Activated CD4-positive, alpha-beta memory T cell treated with anti-CD3 and anti-CD28 coated beads, Interleukin-2, amount 10 ng/mL, durations not matched to agents 7 days and 5 days (primary cell): ENCODE measurements at regions of chr1 and their contacts with region 1.

Region 1: DNA sequence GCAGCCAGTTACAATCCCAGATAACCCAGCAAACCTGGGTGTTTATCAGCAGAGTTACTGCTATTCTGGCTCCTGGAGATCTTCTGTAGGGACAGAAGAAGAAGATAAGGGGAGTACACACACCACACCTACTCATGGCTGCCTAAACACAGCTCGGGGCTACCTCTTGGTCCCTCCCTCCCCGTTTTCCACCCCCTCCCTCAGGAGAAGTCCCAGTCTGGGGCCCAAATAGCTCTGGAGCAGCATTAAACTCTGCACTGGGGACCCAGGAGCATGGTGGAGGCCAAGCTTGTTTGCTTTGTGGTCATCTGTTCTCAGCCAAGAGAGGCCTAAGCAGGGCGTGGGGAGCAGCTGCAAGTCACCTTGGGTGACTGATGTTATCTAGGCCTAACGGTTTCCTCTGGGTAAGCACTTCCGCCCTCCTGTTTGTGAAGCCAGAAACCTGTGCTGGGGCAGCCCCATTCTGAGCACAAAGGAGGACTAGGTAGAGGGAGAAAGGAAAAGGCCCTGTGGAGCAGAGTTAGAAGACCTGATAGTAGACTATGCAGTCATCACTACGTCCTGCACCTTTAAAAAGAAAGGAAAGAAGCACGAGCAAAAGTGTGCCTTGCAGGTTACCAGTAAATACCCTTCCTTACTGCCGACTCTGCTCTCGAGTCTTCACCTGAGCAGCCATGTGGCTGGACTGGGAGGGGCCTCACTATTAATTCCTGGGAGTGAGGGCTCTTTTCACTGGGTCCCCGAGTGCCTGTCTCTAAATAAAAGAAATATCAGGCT is 2.0 kb upstream of the RCSD1 start:
- DNase-seq: peak; percentile 88
- H3K4me3 Mint-ChIP-seq: peak overlapping the region; percentile 87
- H3K27ac Mint-ChIP-seq: peak overlapping the region; percentile 97
- H3K4me1 Mint-ChIP-seq: peaks cover 58% of the 10 kb centered on the region
- H3K27me3 Mint-ChIP-seq: no peaks in the 10 kb centered on the region

Region 2: DNA sequence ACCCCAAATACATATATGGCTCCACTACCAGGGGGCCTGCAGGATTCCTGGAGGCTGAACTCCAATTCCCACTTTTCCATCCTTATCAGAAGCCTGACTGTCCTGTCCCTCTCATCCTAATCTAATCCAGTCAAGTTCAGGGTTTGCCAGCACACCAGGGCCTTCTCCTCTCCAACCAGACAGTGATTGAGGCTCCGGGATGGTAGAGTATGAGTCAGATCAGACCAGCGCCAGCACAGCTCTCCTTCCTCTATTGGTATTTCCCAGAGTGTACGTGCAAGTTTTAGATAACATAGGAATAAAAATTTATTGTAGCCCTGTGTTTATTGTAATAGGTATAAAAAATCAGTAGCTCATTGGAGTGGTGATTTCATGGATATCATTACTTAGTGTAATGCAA is 22.5 kb before region 1 on chr1:
- CTCF ChIA-PET with region 1: interaction called, 62 read pairs
- POLR2A ChIA-PET with region 1: interaction called, 189 read pairs
- DNase-seq: no peak
- H3K4me3 Mint-ChIP-seq: no peak overlapping the region
- H3K27ac Mint-ChIP-seq: no peak overlapping the region
- H3K4me1 Mint-ChIP-seq: peaks cover 30% of the 10 kb centered on the region
- H3K27me3 Mint-ChIP-seq: peaks cover 8% of the 10 kb centered on the region

Region 3: DNA sequence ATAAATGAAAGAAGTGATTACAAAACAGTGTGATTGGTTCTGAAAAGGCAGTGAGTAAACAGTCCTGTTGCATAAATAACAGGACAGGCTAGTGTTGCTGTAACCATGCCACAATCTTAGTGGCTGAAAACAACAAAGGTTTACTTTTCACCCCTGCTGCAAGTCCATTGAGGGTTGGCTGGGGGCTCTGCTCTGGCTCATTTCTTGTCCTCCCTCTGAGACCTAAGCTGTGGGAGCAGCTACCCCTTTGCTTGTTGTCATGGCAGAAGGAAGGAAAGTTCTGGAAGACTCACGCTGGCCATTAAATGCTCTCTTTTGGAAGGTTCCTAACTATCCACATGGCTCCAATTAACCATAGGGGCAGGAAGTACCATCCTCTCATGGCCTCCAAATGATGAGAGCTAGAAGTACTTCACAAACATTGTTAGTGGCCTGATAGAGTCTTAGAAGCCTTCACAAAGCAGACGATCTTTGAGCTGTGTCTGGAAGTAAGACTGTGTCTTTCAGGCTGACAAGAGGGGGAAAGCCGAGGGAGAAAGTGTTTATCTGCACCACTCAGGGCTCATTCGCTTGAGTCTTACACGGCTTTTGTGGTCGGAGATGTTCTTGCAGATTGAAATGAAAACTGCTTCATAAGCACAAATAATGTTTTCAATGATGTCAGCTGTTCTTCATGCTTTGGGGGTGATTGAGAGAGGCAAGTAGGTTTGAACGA is 13.9 kb after region 1 on chr1:
- CTCF ChIA-PET with region 1: interaction called, 10 read pairs
- POLR2A ChIA-PET with region 1: interaction called, 32 read pairs
- DNase-seq: no peak
- H3K4me3 Mint-ChIP-seq: no peak overlapping the region
- H3K27ac Mint-ChIP-seq: peak overlapping the region; percentile 81
- H3K4me1 Mint-ChIP-seq: peaks cover 86% of the 10 kb centered on the region
- H3K27me3 Mint-ChIP-seq: no peaks in the 10 kb centered on the region

Region 4: GRCh38 chr1:167687919-167688519 is 60.0 kb after region 1 on chr1:
- CTCF ChIA-PET with region 1: interaction called, 9 read pairs
- POLR2A ChIA-PET with region 1: interaction called, 13 read pairs
- DNase-seq: peak; percentile 79
- H3K4me3 Mint-ChIP-seq: no peak overlapping the region
- H3K27ac Mint-ChIP-seq: peak overlapping the region; percentile 30
- H3K4me1 Mint-ChIP-seq: peaks cover 13% of the 10 kb centered on the region
- H3K27me3 Mint-ChIP-seq: no peaks in the 10 kb centered on the region

Region 5: DNA sequence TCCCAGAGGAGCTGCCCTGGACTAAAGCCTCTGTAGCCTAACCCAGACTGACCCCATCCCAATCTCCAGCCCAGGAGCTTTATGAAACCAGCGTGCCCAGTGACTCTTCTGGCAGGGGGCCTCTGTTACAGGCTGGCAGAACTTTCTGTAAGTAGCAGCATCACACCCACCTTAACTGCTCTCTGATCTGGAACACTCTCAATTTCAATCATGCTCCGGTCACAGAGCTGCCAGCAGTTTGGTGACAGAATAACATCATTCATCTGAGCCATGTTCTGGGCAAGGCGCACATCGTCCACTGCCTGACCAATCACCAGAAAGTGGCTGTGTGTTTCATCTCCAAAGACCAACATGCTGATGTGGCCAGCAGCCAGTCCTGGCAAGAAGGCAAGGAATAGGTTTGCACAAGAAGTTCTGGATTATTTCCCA is 271.2 kb after region 1 on chr1:
- CTCF ChIA-PET with region 1: no interaction called
- POLR2A ChIA-PET with region 1: no interaction called
- DNase-seq: no peak
- H3K4me3 Mint-ChIP-seq: no peak overlapping the region
- H3K27ac Mint-ChIP-seq: no peak overlapping the region
- H3K4me1 Mint-ChIP-seq: no peaks in the 10 kb centered on the region
- H3K27me3 Mint-ChIP-seq: peaks cover 2% of the 10 kb centered on the region

Region 6: GRCh38 chr1:167936068-167936929 is 308.2 kb after region 1 on chr1 and contains the start of gene DCAF6:
- CTCF ChIA-PET with region 1: interaction called, 4 read pairs
- POLR2A ChIA-PET with region 1: interaction called, 23 read pairs
- DNase-seq: peak; percentile 97
- H3K4me3 Mint-ChIP-seq: peak within 1 kb of the TSS; percentile 88
- H3K27ac Mint-ChIP-seq: peak within 1 kb of the TSS; percentile 93
- H3K4me1 Mint-ChIP-seq: peaks cover 34% of the 10 kb centered on the region
- H3K27me3 Mint-ChIP-seq: no peaks in the 10 kb centered on the region
- total RNA-seq, gene DCAF6: 26.4 to 27.1 TPM